Heart right ventricle (tissue), 16 donors: ENCODE measurements at regions of chr14 and their contacts with region 1.

Region 1: GRCh38 chr14:32259368-32260013 is 56.4 kb upstream of the RNU6-8 start:
- DNase-seq: no peak
- ATAC-seq: no peak
- H3K4me3 ChIP-seq: no peak overlapping the region
- H3K27ac ChIP-seq: no peak overlapping the region
- H3K4me1 ChIP-seq: peaks cover 0 to 49% (median 13%) of the 10 kb centered on the region in 9 donors
- H3K27me3 ChIP-seq: no peaks in the 10 kb centered on the region
- CTCF ChIP-seq: no peak

Region 2: DNA sequence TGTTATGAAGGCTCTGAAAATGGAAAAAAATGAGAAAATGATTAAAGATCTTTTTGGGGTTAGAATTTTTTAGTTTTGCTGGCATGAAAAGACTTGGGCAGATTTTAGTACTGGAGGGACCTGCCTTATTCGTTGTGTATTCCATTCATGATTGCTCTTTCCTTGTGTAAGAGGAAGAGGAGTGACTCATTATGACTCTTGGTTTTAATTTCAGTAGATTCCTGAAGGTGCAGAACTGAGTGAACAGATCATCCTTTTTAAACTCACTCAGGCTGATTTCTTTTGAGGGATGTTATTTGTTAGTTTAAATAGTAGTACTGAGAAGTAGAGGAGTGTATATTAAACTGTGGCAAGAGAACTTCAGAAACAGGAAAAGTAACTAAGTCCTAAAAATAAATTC is 111.2 kb after region 1 on chr14:
- intact Hi-C with region 1: loop called in 1 of 10 experiments (anchors 10 kb)
- DNase-seq: no peak
- ATAC-seq: no peak
- H3K4me3 ChIP-seq: no peak overlapping the region
- H3K27ac ChIP-seq: no peak overlapping the region
- H3K4me1 ChIP-seq: peaks cover 1 to 28% (median 15%) of the 10 kb centered on the region in 9 donors
- H3K27me3 ChIP-seq: no peaks in the 10 kb centered on the region
- CTCF ChIP-seq: no peak

Region 3: DNA sequence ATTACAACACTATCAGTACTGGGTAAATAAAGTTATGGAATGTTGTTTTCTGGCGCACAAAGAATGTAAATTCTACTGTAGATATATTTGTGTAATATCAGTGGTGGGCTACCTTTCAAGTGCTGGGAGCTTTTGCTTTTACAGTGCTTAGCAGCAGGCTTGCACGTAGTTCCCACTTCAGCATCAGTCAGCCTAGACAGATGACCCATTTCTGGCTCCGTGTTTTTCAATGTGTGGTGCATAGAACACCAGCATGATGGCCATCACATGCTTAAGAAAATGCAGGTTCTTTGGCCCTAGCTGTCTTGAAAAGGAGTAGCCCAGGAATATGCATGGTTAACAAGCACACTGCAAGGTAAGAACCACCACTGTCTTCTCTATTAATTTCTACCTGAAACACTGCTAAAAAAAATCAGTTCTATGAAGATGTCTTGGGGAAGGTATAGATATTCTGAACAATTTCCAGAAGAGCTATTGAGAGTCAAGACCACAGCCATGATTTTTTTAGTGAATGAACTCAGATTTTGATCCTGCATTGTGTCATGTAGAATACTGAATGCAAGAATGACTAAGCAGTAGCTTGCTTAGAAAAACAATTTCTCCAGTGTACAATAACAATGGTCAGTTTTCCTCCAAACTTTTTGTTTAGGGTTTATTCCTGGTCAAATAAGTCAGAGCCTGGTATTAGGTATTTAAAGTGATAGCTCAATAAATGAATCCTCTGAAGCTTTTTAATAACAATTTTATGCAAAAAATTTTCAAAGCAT is 265.3 kb after region 1 on chr14:
- intact Hi-C with region 1: no loop called
- DNase-seq: no peak
- ATAC-seq: peak in 1 of 8 donors; percentile 44
- H3K4me3 ChIP-seq: no peak overlapping the region
- H3K27ac ChIP-seq: peak overlapping the region in 1 of 10 donors; percentile 15
- H3K4me1 ChIP-seq: peaks cover 0 to 17% (median 4%) of the 10 kb centered on the region in 9 donors
- H3K27me3 ChIP-seq: no peaks in the 10 kb centered on the region
- CTCF ChIP-seq: no peak

Region 4: DNA sequence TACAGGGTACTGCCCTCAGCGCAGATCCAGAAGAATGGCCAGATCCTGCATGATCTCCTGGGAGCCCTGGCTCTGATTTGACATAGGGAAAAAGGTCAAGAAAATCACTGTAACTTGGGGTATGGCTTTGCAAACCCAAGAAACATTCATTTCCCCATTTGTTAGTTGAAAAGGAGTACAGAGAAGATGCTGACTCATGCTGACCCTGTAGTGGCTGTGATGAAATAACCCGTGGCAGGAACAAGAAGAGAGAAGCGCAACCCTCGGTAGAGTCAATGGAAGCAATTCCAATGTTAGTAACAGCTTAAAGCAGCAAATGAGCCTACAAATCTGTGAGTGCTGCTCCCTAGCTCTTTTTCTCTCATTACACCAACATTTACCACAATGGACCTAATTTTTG is 397.6 kb after region 1 on chr14:
- intact Hi-C with region 1: no loop called
- DNase-seq: peak in 1 of 2 donors; percentile 22
- ATAC-seq: peak; percentile 56 to 80 (median 65)
- H3K4me3 ChIP-seq: no peak overlapping the region
- H3K27ac ChIP-seq: peak overlapping the region in 2 of 10 donors; percentile 3 to 56
- H3K4me1 ChIP-seq: peaks cover 0 to 40% (median 13%) of the 10 kb centered on the region in 9 donors
- H3K27me3 ChIP-seq: no peaks in the 10 kb centered on the region
- CTCF ChIP-seq: no peak

Region 5: DNA sequence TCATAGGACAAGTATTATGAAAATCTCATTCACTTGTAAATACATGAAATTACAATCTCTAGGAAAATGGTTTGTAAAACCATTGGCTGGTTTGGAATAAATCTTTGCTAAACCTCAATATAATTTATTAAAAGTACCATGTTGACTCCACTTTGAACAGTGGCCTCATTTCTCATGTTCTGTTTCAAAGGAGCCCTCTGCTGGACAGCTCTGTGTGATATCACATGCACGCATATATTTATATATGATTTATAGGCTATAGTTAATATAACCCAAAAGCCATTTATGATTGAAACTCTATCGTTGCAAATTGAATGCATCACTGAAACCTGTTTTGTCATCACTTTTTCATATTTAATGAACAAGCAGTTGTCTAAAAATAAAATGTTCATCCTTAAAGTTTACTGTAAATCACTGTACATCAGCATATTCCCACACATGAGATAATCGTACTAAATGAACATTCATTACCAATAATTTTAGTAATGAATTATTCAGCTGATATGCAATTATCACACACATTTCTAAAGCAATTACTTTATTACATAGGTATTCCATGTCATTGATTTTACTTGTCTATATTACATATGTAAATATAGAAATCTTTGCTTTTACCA is 1173.0 kb after region 1 on chr14:
- intact Hi-C with region 1: no loop called
- DNase-seq: no peak
- ATAC-seq: no peak
- H3K4me3 ChIP-seq: no peak overlapping the region
- H3K27ac ChIP-seq: no peak overlapping the region
- H3K4me1 ChIP-seq: peaks cover 0 to 7% (median 0%) of the 10 kb centered on the region in 9 donors
- H3K27me3 ChIP-seq: no peaks in the 10 kb centered on the region
- CTCF ChIP-seq: peak in 8 of 9 donors; percentile 22 to 55 (median 52)